Activated CD8-positive, alpha-beta T cell treated with anti-CD3 and anti-CD28 coated beads for 36 hours (primary cell): ENCODE measurements at regions of chr15 and their contacts with region 1.

Region 1: GRCh38 chr15:64046347-64047153 is at the start of gene DAPK2:
- DNase-seq: peak; percentile 60
- ATAC-seq: peak; percentile 89
- H3K4me3 Mint-ChIP-seq: peak within 1 kb of the TSS; percentile 66
- H3K27ac Mint-ChIP-seq: peak within 1 kb of the TSS; percentile 8
- H3K4me1 Mint-ChIP-seq: peaks cover 7% of the 10 kb centered on the region
- H3K27me3 Mint-ChIP-seq: peaks cover 11% of the 10 kb centered on the region
- CTCF ChIP-seq: peak; percentile 81
- total RNA-seq, gene DAPK2: 1.2 to 1.5 TPM

Region 2: DNA sequence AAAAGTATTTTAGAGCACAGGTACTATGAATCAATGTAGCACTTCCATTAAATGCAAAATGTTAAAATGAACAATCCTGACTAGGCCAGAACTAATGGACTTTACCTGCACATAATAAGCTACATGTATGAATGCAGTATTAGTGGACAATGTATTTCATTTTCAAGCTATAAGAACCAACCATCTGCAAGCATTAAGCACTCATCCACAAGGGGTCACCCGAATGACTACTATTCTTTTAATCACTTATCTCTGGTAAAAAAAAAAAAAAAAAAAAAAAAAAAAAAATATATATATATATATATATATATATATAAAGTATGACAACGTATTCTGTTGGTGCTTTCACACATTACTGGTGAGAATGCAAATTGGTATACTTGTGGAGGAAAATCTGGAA is 220.0 kb before region 1 on chr15:
- CTCF ChIA-PET with region 1: interaction called, 7 read pairs
- POLR2A ChIA-PET with region 1: no interaction called
- intact Hi-C with region 1: loop called (anchors 10 kb)
- DNase-seq: peak; percentile 58
- ATAC-seq: no peak
- H3K4me3 Mint-ChIP-seq: no peak overlapping the region
- H3K27ac Mint-ChIP-seq: no peak overlapping the region
- H3K4me1 Mint-ChIP-seq: peaks cover 72% of the 10 kb centered on the region
- H3K27me3 Mint-ChIP-seq: no peaks in the 10 kb centered on the region
- CTCF ChIP-seq: peak; percentile 11

Region 3: GRCh38 chr15:63945007-63945788 is 101.4 kb before region 1 on chr15:
- CTCF ChIA-PET with region 1: interaction called, 73 read pairs
- POLR2A ChIA-PET with region 1: interaction called, 3 read pairs
- intact Hi-C with region 1: loop called (anchors 10 kb)
- DNase-seq: peak; percentile 86
- ATAC-seq: peak; percentile 98
- H3K4me3 Mint-ChIP-seq: no peak overlapping the region
- H3K27ac Mint-ChIP-seq: peak overlapping the region; percentile 3
- H3K4me1 Mint-ChIP-seq: peaks cover 8% of the 10 kb centered on the region
- H3K27me3 Mint-ChIP-seq: no peaks in the 10 kb centered on the region
- CTCF ChIP-seq: peak; percentile 91

Region 4: GRCh38 chr15:64004582-64004981 is 42.0 kb before region 1 on chr15:
- CTCF ChIA-PET with region 1: interaction called, 14 read pairs
- POLR2A ChIA-PET with region 1: interaction called, 3 read pairs
- intact Hi-C with region 1: no loop called
- DNase-seq: no peak
- ATAC-seq: no peak
- H3K4me3 Mint-ChIP-seq: no peak overlapping the region
- H3K27ac Mint-ChIP-seq: no peak overlapping the region
- H3K4me1 Mint-ChIP-seq: peaks cover 15% of the 10 kb centered on the region
- H3K27me3 Mint-ChIP-seq: peaks cover 4% of the 10 kb centered on the region
- CTCF ChIP-seq: no peak

Region 5: GRCh38 chr15:64029110-64029509 is 17.4 kb before region 1 on chr15:
- CTCF ChIA-PET with region 1: interaction called, 27 read pairs
- POLR2A ChIA-PET with region 1: interaction called, 4 read pairs
- intact Hi-C with region 1: no loop called
- DNase-seq: no peak
- ATAC-seq: peak; percentile 13
- H3K4me3 Mint-ChIP-seq: no peak overlapping the region
- H3K27ac Mint-ChIP-seq: peak overlapping the region; percentile 21
- H3K4me1 Mint-ChIP-seq: peaks cover 29% of the 10 kb centered on the region
- H3K27me3 Mint-ChIP-seq: no peaks in the 10 kb centered on the region
- CTCF ChIP-seq: no peak

Region 6: GRCh38 chr15:64267331-64267973 is 220.9 kb after region 1 on chr15:
- CTCF ChIA-PET with region 1: no interaction called
- POLR2A ChIA-PET with region 1: no interaction called
- intact Hi-C with region 1: no loop called
- DNase-seq: no peak
- ATAC-seq: no peak
- H3K4me3 Mint-ChIP-seq: no peak overlapping the region
- H3K27ac Mint-ChIP-seq: peak overlapping the region; percentile 41
- H3K4me1 Mint-ChIP-seq: peaks cover 42% of the 10 kb centered on the region
- H3K27me3 Mint-ChIP-seq: no peaks in the 10 kb centered on the region
- CTCF ChIP-seq: no peak

Region 7: GRCh38 chr15:64305261-64305660 is 258.7 kb after region 1 on chr15:
- CTCF ChIA-PET with region 1: no interaction called
- POLR2A ChIA-PET with region 1: no interaction called
- intact Hi-C with region 1: no loop called
- DNase-seq: no peak
- ATAC-seq: no peak
- H3K4me3 Mint-ChIP-seq: no peak overlapping the region
- H3K27ac Mint-ChIP-seq: no peak overlapping the region
- H3K4me1 Mint-ChIP-seq: peaks cover 7% of the 10 kb centered on the region
- H3K27me3 Mint-ChIP-seq: no peaks in the 10 kb centered on the region
- CTCF ChIP-seq: no peak